SK-N-SH (cell line): ENCODE measurements at regions of chr11 and their contacts with region 1.

Region 1: DNA sequence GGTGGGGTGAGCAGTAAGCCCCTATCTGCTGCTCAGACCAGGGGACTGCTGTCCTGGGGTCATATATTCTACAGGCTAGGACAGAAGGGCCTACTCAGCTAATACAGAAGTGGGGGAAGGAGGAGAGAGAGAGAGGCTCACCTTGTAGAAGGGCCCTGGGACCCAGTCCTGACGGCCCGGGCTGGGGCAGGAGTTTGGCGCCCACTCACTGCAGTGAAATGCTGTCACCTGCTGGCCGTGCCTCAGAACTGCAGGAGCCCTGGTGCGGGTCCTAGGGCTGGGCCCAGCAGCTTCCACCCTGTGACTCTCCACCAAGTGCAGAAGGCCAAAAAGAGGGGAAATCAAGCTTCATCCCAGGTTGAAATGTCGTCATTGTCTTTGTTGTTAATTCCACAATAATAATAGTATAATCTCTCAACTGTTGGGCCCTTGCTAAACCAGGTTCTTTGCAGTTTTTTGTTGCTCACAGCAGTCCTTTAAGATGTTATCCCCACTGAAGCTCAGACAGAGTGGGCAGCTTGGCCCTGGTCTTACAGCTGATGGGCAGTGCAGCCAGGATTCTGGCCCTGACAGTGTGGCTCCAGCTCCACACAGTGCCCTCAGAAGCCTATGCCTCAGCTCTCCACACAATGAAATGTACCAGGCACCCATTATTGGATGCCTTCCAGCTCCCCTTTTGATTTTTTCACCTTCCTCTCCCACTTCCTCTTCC is 29.6 kb downstream of the TRIM29 start:
- DNase-seq: peak; percentile 95
- H3K4me3 ChIP-seq: peak overlapping the region in 1 of 2 experiments; percentile 24; a peak in 1 of 4 replicates
- H3K27ac ChIP-seq: peak overlapping the region in 1 of 2 experiments; percentile 56; a peak in 2 of 4 replicates
- H3K4me1 ChIP-seq: peaks cover 0 to 43% of the 10 kb centered on the region in 2 experiments; a peak in 1 of 4 replicates
- H3K27me3 ChIP-seq: peaks cover 17% of the 10 kb centered on the region; the same call in 1 of the 2 replicates
- CTCF ChIP-seq: peak; percentile 98
- EP300 ChIP-seq: no peak
- RAD21 ChIP-seq: peak; percentile 99

Region 2: DNA sequence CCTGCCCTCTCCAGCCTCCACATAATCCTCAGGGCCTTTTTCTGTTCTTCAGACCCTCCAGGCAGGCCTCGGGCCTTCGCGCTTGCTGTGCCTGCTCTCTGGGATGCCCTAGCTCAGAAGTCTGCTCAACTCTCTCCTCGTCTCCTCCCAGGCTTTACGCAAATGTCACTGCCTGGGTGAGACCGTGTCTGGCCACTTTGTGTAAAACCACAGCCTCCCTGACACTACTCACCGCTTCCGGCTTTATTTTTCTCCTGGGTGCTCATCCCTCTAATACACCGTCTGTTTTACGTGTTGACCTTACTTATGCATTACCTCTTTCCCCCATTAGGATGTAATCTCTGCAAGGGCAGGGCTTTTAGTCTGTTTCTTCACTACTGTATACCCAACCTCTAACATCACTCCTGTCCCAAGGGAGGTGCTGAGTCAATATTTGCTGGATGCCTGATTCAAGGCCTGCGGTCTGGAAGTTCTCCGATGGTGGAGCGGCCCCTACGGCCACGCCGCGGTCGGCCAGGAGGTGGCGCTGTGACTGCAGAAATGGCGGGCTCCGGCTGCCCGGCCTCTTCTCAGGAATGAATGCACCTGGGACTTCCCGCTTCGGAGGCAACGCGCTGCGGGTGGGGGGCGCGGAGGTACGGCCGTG is 627.2 kb before region 1 on chr11:
- CTCF ChIA-PET with region 1: interaction called, 27 read pairs
- POLR2A ChIA-PET with region 1: no interaction called
- DNase-seq: peak; percentile 92
- H3K4me3 ChIP-seq: peak overlapping the region in 1 of 2 experiments; percentile 53; a peak in 1 of 4 replicates
- H3K27ac ChIP-seq: no peak overlapping the region
- H3K4me1 ChIP-seq: peaks cover 0 to 5% of the 10 kb centered on the region in 2 experiments; a peak in 1 of 4 replicates
- H3K27me3 ChIP-seq: peaks cover 6% of the 10 kb centered on the region; the same call in 1 of the 2 replicates
- CTCF ChIP-seq: peak; percentile 97
- EP300 ChIP-seq: no peak
- RAD21 ChIP-seq: peak; percentile 95

Region 3: DNA sequence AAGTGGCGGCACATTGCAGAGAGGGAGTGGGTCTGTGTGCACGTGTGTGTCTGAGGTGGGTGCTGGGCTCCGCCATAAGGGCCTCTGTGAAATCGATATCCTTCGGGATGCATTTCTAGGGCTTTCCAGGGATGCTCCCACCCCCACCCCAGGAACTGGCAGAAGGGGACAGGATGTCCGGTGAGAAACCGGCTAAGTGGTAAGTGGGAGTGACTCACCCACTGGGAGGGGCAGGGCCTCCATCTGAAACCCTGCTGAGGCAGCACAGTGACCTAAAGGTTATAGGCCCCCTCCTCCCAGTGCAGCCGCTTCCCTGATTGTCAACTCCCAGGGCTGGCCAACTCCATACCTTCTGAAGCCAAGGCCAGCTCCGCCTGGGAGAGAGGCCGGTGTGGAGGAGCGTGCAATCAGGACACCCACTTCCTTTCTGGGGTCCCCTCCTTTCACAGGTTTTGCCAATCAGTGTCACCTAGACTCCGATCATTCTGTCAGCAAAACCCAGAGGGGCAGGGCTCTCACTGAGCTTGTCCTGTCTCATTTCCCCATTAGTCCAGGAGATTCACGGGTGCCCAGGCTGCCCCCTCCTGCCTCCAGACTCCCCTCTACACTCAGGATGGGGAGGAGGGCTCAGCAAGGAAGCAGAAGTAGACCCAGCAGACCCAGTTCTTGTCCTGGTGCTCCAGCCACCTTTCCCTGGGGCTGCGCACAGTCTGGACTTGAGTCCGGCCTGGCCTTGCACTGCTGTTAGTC is 423.8 kb before region 1 on chr11:
- CTCF ChIA-PET with region 1: interaction called, 11 read pairs
- POLR2A ChIA-PET with region 1: interaction called, 3 read pairs
- DNase-seq: peak; percentile 69
- H3K4me3 ChIP-seq: no peak overlapping the region
- H3K27ac ChIP-seq: peak overlapping the region; percentile 45 to 97
- H3K4me1 ChIP-seq: peaks cover 15 to 98% of the 10 kb centered on the region in 2 experiments
- H3K27me3 ChIP-seq: no peaks in the 10 kb centered on the region
- CTCF ChIP-seq: no peak
- EP300 ChIP-seq: no peak
- RAD21 ChIP-seq: no peak; the same call in 1 of the 2 replicates

Region 4: DNA sequence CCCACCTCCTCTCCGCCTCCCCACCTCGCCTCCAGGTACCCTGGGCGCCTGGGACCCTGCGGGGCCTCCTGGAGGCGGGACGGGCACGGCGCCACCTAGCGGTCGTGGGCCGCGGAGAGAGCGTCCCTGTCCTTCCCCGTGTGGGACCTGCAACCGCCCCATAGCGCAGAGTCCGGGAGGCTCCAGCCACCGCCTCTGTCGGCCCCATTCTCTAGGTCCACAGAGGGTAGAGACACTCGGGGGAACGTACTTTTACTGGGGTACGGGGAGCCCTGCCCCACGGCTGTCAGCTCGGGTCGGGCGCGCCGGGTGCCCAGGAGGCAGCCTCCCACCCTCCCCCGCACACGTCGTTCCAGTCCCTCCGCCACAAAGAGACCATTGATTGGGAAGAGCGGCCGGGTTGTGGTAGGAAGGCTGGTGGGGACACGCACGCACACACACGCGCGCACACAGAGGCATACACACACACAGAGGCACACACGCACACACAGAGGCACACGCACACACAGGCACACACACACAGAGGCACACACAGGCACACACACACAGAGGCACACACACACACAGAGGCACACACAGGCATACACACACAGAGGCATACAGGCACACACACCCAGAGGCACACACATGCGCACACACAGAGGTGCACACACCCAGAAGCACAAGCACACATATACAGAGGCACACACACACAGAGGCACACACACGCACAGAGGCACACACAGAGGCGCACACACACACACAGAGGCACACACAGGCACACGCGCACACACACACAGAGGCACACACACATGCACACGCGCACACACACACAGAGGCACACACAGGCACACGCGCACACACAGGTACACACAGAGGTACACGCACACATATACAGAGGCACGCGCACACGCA is 366.7 kb before region 1 on chr11:
- CTCF ChIA-PET with region 1: interaction called, 20 read pairs
- POLR2A ChIA-PET with region 1: no interaction called
- DNase-seq: no peak
- H3K4me3 ChIP-seq: no peak overlapping the region
- H3K27ac ChIP-seq: no peak overlapping the region; a peak in 1 of 4 replicates
- H3K4me1 ChIP-seq: peaks cover 0 to 44% of the 10 kb centered on the region in 2 experiments; a peak in 2 of 4 replicates
- H3K27me3 ChIP-seq: no peaks in the 10 kb centered on the region
- CTCF ChIP-seq: peak; percentile 33
- EP300 ChIP-seq: no peak
- RAD21 ChIP-seq: no peak

Region 5: GRCh38 chr11:119891055-119891768 is 217.1 kb before region 1 on chr11:
- CTCF ChIA-PET with region 1: interaction called, 46 read pairs
- POLR2A ChIA-PET with region 1: interaction called, 6 read pairs
- DNase-seq: peak; percentile 74
- H3K4me3 ChIP-seq: no peak overlapping the region
- H3K27ac ChIP-seq: peak overlapping the region in 1 of 2 experiments; percentile 100; a peak in 2 of 4 replicates
- H3K4me1 ChIP-seq: peaks cover 0 to 80% of the 10 kb centered on the region in 2 experiments; a peak in 2 of 4 replicates
- H3K27me3 ChIP-seq: peaks cover 17% of the 10 kb centered on the region
- CTCF ChIP-seq: no peak
- EP300 ChIP-seq: peak in 1 of 2 experiments; percentile 96; a peak in 2 of 4 replicates
- RAD21 ChIP-seq: peak; percentile 38; the same call in 1 of the 2 replicates

Region 6: DNA sequence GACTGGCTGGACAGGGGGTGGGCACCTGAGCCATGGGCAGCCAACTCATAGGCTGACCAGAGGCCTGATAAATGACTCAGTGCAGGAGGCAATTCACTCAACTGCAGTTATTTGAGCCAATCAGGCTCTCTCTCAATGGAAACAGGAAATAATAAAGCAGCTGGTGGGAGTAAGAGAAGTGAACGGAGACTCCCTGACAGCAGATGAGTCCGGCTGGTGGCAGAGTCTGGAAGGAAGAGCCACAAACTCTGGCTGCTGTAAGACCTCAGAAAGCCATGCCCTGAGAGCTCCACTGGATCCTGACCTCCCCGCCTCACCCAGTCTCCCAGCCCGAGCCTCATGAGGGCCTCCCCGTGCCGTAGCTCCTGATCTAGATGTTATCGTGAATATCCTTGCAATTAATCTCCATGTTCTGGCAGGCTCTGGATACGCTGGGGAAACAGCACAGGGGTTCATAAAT is 40.2 kb before region 1 on chr11:
- CTCF ChIA-PET with region 1: interaction called, 11 read pairs
- POLR2A ChIA-PET with region 1: no interaction called
- DNase-seq: peak; percentile 75
- H3K4me3 ChIP-seq: peak overlapping the region; percentile 16 to 26; a peak in 1 of 4 replicates
- H3K27ac ChIP-seq: peak overlapping the region in 1 of 2 experiments; percentile 76; a peak in 2 of 4 replicates
- H3K4me1 ChIP-seq: peaks cover 0 to 29% of the 10 kb centered on the region in 2 experiments; a peak in 2 of 4 replicates
- H3K27me3 ChIP-seq: 0 out of 2 replicates have a peak, but pooled peaks cover 3% of the 10 kb centered on the region
- CTCF ChIP-seq: no peak
- EP300 ChIP-seq: peak in 1 of 2 experiments; percentile 75; a peak in 2 of 4 replicates
- RAD21 ChIP-seq: peak; percentile 31

Region 7: DNA sequence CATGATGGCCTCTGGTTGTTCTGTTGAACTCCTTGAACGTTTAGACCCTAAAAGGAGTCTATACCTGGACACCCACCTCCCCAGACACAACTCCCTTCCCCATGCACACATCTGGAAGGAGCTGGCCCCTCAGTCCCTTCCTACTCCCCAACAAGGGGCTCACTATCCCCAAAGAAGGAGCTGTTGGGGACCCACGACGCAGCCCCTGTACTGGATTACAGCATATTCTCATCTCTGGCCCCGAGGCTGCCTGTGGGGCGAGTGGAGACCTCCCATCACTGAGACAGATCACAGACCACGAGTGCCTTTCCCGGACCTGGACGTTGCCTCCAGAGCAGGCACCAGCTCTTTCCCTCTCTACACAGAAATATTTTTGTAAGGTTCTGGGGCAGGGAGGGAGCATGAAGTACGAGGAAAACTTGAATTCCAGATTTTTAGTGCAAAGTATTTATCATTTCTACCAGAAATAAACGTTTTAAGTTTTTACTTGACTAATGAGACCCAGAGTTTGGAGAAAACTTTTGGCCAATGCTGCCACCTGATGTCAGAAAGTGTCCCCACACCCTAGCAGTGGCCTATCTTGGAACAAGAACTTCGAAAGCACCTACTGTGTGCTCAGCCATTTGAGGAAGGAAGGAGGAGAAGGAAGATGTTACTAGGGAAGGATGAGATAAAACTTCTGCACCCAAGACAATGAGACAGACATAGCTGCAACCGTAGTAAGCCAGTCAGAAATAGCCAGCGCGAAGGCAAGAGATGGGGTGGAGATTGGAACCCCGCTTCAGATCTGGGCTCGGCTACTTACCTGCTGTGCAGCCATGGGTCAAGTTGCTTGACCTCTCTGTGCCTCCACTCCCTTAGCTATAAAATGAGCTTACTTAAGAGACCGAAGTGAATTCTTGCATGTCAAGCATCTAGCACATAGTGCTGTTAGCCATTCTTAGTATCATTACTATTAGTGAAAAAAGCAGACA is 121.4 kb after region 1 on chr11:
- CTCF ChIA-PET with region 1: interaction called, 17 read pairs
- POLR2A ChIA-PET with region 1: no interaction called
- DNase-seq: peak; percentile 66
- H3K4me3 ChIP-seq: no peak overlapping the region; a peak in 1 of 4 replicates
- H3K27ac ChIP-seq: no peak overlapping the region
- H3K4me1 ChIP-seq: no peaks in the 10 kb centered on the region; a peak in 1 of 4 replicates
- H3K27me3 ChIP-seq: no peaks in the 10 kb centered on the region; the same call in 1 of the 2 replicates
- CTCF ChIP-seq: peak; percentile 78
- EP300 ChIP-seq: no peak
- RAD21 ChIP-seq: peak; percentile 84